ENCODE measurements at regions of chr17 and their contacts with region 1.

Region 1: GRCh38 chr17:3668279-3669085 is at the starts of genes EMC6 and TAX1BP3:
- DNase-seq: peak; percentile 100
- CTCF ChIP-seq: no peak

Region 2: DNA sequence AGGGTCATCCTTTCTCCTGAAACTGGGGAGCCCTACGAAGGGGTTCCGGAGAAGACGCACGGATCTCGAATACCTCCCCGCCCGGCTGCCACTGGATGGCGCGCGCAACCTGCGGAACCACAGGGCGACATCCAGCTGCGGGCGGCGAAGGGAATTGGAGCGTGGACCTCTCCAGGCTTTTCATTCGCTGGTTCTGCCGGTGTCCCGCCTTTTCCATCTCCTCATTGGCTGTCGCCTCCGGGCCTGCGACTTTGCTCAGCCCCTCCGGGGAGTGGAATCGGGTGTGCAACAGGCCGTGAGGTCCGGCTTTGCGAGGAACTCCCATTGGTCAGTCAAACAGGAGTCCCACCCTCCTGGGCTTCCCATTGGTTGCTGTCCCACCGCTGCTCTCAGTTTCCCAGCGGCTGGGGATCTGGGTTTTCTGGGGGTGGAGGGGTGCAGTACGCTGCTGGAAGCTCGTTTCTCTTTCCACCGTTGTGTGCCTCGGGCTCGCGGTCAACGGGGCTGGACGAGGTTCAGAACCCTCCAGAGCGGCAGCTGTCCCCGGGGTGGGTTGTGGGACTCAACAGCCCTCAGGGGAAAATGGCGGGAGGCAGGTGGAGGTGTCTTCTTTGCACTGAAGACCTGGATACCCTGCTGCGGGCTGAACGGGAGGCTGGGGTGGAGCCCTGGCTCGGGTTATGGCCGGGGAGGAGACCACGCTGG is 619.6 kb before region 1 on chr17:
- in situ Hi-C with region 1: loop called (anchors 25 kb)
- DNase-seq: peak; percentile 82
- CTCF ChIP-seq: peak; percentile 78